Gastrocnemius medialis (tissue), 4 donors: ENCODE measurements at regions of chr9 and their contacts with region 1.

Region 1: GRCh38 chr9:13962006-13962405 is 351.9 kb downstream of the NFIB start:
- DNase-seq: no peak
- ATAC-seq: peak; percentile 26 to 27
- H3K4me3 ChIP-seq: no peak overlapping the region
- H3K27ac ChIP-seq: peak overlapping the region in 3 of 4 donors; percentile 8 to 43 (median 31)
- H3K4me1 ChIP-seq: peaks cover 0 to 6% of the 10 kb centered on the region in 2 donors
- H3K27me3 ChIP-seq: no peaks in the 10 kb centered on the region
- CTCF ChIP-seq: no peak
- POLR2A ChIP-seq: no peak

Region 2: GRCh38 chr9:13917534-13917933 is 44.5 kb before region 1 on chr9:
- in situ Hi-C with region 1: no loop called
- intact Hi-C with region 1: loop called (anchors 1 kb)
- DNase-seq: no peak
- ATAC-seq: no peak
- H3K4me3 ChIP-seq: no peak overlapping the region
- H3K27ac ChIP-seq: no peak overlapping the region
- H3K4me1 ChIP-seq: peaks cover 14 to 15% of the 10 kb centered on the region in 2 donors
- H3K27me3 ChIP-seq: no peaks in the 10 kb centered on the region
- CTCF ChIP-seq: no peak
- POLR2A ChIP-seq: no peak